ENCODE measurements at regions of chr12 and their contacts with region 1.

Region 1: DNA sequence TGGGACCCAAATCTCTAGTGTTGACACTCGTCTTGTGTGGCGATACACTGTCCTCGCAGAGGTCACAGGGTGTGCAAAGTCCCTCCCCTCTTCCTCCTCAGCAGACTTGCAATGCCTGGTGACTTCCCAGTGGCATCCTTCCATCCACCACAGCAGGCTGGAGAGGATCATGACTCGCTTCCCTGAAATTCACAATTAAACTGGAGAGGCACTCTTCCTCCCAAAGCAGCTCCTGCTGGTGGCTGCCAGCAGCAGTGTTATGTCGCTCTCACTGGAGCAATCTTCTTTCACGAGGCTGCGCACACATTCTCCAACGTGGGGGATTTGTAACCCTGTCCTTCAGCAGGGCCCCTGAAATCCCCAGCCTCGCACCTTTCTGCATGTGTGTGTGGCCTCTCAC is 145.2 kb upstream of the TMCC3 start:
- DNase-seq: peak in 1 of 2 donors; percentile 54
- ATAC-seq: peak in 1 of 4 donors; percentile 27
- H3K4me3 ChIP-seq: no peak overlapping the region
- H3K27ac ChIP-seq: no peak overlapping the region
- H3K4me1 ChIP-seq: no peaks in the 10 kb centered on the region
- H3K27me3 ChIP-seq: no peaks in the 10 kb centered on the region
- CTCF ChIP-seq: no peak

Region 2: DNA sequence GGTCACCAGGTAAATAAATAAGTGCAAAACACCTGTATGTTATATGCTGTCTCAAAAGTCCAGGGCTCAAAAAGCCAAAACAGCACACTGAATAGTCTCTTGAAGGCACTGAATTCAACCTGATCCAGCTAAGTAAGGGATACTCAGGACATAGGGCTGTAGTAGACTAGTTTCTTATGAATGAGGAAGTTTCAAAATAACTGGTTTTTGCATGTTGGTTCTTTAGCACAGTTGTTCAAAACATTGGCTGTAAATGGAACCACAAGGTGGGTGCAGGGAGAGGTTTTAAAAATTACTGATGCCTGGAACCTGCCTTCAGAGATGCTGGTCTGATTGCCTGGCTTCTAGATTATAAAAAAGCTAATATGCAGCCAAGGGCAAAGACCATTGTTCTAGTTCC is 173.9 kb after region 1 on chr12:
- intact Hi-C with region 1: loop called in 1 of 2 experiments (anchors 10 kb)
- DNase-seq: no peak
- ATAC-seq: no peak
- H3K4me3 ChIP-seq: no peak overlapping the region
- H3K27ac ChIP-seq: no peak overlapping the region
- H3K4me1 ChIP-seq: no peaks in the 10 kb centered on the region
- H3K27me3 ChIP-seq: no peaks in the 10 kb centered on the region
- CTCF ChIP-seq: no peak